RWPE1 (cell line): ENCODE measurements at regions of chr1 and their contacts with region 1.

Region 1: DNA sequence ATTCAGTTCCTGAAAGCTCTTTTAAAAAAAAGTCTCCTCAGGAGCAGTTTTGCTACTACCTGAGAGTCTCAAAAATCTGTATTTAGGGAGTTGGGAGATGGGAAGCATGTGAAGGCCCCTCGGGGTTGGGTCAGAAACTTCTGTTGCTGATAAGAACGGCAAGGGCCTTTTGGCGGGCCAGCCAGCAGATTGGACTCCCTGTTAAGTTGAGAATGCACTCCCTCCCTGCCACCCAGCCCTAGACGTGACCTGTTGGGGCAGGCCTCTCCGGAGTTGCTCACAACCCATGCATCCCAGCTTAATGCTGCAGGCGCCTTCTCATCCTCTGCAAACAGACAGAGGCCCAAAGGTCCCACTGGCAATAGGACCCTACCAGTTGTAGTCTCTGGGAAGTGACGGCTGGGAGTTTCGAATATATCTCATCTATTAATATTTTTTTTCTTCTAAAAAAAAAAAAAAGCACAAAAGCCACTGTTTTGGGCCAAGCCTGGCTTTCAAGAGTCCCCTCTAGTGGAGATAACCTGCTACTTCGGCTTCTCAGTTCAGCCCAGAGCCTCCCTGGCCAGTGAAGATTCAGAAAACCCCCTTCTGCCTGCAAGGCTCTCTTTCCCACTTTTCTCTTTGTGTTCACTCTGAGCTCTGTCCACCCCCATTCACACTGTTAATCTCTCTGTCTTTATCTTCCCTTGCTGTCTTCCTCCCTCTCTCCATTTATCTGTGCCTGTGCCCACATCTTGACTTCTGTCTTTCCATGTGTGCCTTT is 5.3 kb downstream of the PLXNA2 start:
- DNase-seq: peak; percentile 83
- H3K27ac ChIP-seq: peak overlapping the region; percentile 83
- CTCF ChIP-seq: peak; percentile 87

Region 2: GRCh38 chr1:208132287-208132883 is 106.5 kb before region 1 on chr1:
- CTCF ChIA-PET with region 1: interaction called, 14 read pairs
- POLR2A ChIA-PET with region 1: no interaction called
- DNase-seq: peak; percentile 90
- H3K27ac ChIP-seq: peak overlapping the region; percentile 55
- CTCF ChIP-seq: peak; percentile 75

Region 3: GRCh38 chr1:208219659-208220282 is 19.1 kb before region 1 on chr1:
- CTCF ChIA-PET with region 1: interaction called, 13 read pairs
- POLR2A ChIA-PET with region 1: interaction called, 6 read pairs
- DNase-seq: peak; percentile 92
- H3K27ac ChIP-seq: peak overlapping the region; percentile 93
- CTCF ChIP-seq: no peak